CD8-positive, alpha-beta T cell (primary cell): ENCODE measurements at regions of chr10 and their contacts with region 1.

Region 1: GRCh38 chr10:93482145-93482834 is at the start of gene MYOF:
- DNase-seq: peak; percentile 10 to 79 (median 34)
- ATAC-seq: peak; percentile 95
- H3K4me3 ChIP-seq: peak within 1 kb of the TSS; percentile 38 to 44
- H3K4me3 Mint-ChIP-seq: peak within 1 kb of the TSS; percentile 84
- H3K27ac ChIP-seq: no peak within 1 kb of the TSS
- H3K27ac Mint-ChIP-seq: no peak within 1 kb of the TSS
- H3K4me1 ChIP-seq: peaks cover 6% of the 10 kb centered on the region
- H3K4me1 Mint-ChIP-seq: peaks cover 6% of the 10 kb centered on the region
- H3K27me3 ChIP-seq: peaks cover 3 to 10% of the 10 kb centered on the region in 2 experiments
- H3K27me3 Mint-ChIP-seq: peaks cover 31% of the 10 kb centered on the region
- CTCF ChIP-seq: peak; percentile 81
- total RNA-seq, gene MYOF: not detected

Region 2: GRCh38 chr10:93363891-93364648 is 118.2 kb before region 1 on chr10:
- CTCF ChIA-PET with region 1: interaction called, 28 read pairs
- POLR2A ChIA-PET with region 1: interaction called, 3 read pairs
- intact Hi-C with region 1: no loop called
- DNase-seq: no peak
- ATAC-seq: no peak
- H3K4me3 ChIP-seq: no peak overlapping the region
- H3K4me3 Mint-ChIP-seq: no peak overlapping the region
- H3K27ac ChIP-seq: no peak overlapping the region
- H3K27ac Mint-ChIP-seq: no peak overlapping the region
- H3K4me1 ChIP-seq: no peaks in the 10 kb centered on the region
- H3K4me1 Mint-ChIP-seq: no peaks in the 10 kb centered on the region
- H3K27me3 ChIP-seq: no peaks in the 10 kb centered on the region
- H3K27me3 Mint-ChIP-seq: peaks cover 6% of the 10 kb centered on the region
- CTCF ChIP-seq: no peak

Region 3: DNA sequence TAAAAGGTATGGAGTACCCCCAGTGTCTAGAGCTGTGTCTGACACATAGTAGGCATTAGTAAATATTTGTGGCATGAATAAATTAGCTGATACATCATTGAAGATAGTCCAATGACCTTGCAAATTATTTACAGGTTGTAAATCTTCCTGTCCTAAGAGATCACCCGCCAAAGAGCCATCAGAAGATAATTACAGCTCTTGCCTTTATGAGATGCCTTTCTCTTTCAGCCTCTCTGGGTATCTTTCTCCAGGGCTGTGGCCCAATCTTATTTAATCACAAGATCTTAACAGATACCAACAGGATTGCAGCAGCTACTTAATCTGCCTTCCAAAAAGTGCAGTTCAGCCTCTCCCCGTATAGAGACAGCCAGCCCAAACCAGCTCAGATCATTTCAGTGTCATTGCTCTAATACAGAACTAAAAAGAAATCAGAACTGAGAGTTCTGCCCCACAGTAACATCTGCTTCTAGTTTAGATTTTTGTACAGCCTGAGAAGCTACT is 41.6 kb before region 1 on chr10:
- CTCF ChIA-PET with region 1: interaction called, 13 read pairs
- POLR2A ChIA-PET with region 1: no interaction called
- intact Hi-C with region 1: no loop called
- DNase-seq: no peak
- ATAC-seq: no peak
- H3K4me3 ChIP-seq: no peak overlapping the region
- H3K4me3 Mint-ChIP-seq: no peak overlapping the region
- H3K27ac ChIP-seq: no peak overlapping the region
- H3K27ac Mint-ChIP-seq: no peak overlapping the region
- H3K4me1 ChIP-seq: no peaks in the 10 kb centered on the region
- H3K4me1 Mint-ChIP-seq: no peaks in the 10 kb centered on the region
- H3K27me3 ChIP-seq: no peaks in the 10 kb centered on the region
- H3K27me3 Mint-ChIP-seq: no peaks in the 10 kb centered on the region
- CTCF ChIP-seq: no peak

Region 4: GRCh38 chr10:93496322-93497041 is 14.2 kb after region 1 on chr10 and contains the start of gene CEP55:
- CTCF ChIA-PET with region 1: interaction called, 16 read pairs
- POLR2A ChIA-PET with region 1: interaction called, 8 read pairs
- intact Hi-C with region 1: loop called in 1 of 2 experiments (anchors 1 kb)
- DNase-seq: peak; percentile 90 to 96 (median 95)
- ATAC-seq: peak; percentile 99
- H3K4me3 ChIP-seq: peak within 1 kb of the TSS; percentile 87 to 97
- H3K4me3 Mint-ChIP-seq: peak within 1 kb of the TSS; percentile 90
- H3K27ac ChIP-seq: peak within 1 kb of the TSS in 1 of 2 experiments; percentile 54
- H3K27ac Mint-ChIP-seq: no peak within 1 kb of the TSS
- H3K4me1 ChIP-seq: peaks cover 10% of the 10 kb centered on the region
- H3K4me1 Mint-ChIP-seq: peaks cover 14% of the 10 kb centered on the region
- H3K27me3 ChIP-seq: no peaks in the 10 kb centered on the region
- H3K27me3 Mint-ChIP-seq: peaks cover 10% of the 10 kb centered on the region
- CTCF ChIP-seq: no peak
- total RNA-seq, gene CEP55: 0.16 TPM in 1 of 2 experiments, not detected in the other

Region 5: GRCh38 chr10:93509816-93510215 is 27.5 kb after region 1 on chr10:
- CTCF ChIA-PET with region 1: interaction called, 33 read pairs
- POLR2A ChIA-PET with region 1: no interaction called
- intact Hi-C with region 1: no loop called
- DNase-seq: no peak
- ATAC-seq: no peak
- H3K4me3 ChIP-seq: no peak overlapping the region
- H3K4me3 Mint-ChIP-seq: no peak overlapping the region
- H3K27ac ChIP-seq: no peak overlapping the region
- H3K27ac Mint-ChIP-seq: no peak overlapping the region
- H3K4me1 ChIP-seq: no peaks in the 10 kb centered on the region
- H3K4me1 Mint-ChIP-seq: no peaks in the 10 kb centered on the region
- H3K27me3 ChIP-seq: no peaks in the 10 kb centered on the region
- H3K27me3 Mint-ChIP-seq: peaks cover 2% of the 10 kb centered on the region
- CTCF ChIP-seq: no peak

Region 6: DNA sequence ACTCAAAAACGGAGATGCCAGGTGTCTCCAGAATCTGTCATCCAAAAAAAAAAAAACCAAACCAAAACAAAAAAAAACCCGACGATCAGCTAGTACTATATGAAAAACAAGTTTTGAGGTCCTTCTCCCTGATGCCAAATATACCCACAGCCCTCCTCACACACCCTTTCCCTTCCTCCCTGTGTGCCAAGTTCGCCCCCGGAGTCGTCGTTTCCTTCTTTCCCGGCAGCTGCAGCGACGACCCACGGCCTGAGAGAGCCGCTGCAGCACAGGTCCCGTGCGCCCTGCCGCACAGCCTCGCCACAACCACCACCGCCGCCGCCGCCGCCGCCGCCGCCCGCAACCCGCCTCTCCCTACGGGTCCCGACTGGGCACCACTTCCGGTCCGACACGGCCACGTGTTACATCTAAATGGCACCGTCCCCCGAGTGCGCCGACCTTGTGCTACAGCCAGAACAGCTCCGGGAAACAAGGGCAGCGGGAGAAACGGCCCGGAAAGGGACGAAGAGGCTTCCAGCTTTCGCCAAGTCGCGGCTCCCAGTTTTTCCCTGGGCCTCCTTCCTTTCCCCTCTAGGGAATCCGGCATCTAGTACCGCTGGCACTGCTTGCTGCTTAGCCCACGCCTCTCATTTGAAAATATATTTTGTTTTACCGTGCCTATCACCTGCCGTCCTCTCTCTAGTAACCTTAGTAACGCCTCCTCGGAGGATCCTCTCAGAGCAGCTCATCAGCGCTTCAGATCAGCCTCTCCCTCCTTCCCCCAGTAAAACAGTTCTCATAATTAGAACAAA is 220.1 kb after region 1 on chr10 and contains the start of gene FRA10AC1:
- CTCF ChIA-PET with region 1: no interaction called
- POLR2A ChIA-PET with region 1: no interaction called
- intact Hi-C with region 1: no loop called
- DNase-seq: peak; percentile 73 to 94 (median 89)
- ATAC-seq: peak; percentile 83
- H3K4me3 ChIP-seq: peak within 1 kb of the TSS; percentile 90 to 96
- H3K4me3 Mint-ChIP-seq: no peak within 1 kb of the TSS
- H3K27ac ChIP-seq: peak within 1 kb of the TSS; percentile 82 to 86
- H3K27ac Mint-ChIP-seq: no peak within 1 kb of the TSS
- H3K4me1 ChIP-seq: peaks cover 14% of the 10 kb centered on the region
- H3K4me1 Mint-ChIP-seq: peaks cover 15% of the 10 kb centered on the region
- H3K27me3 ChIP-seq: no peaks in the 10 kb centered on the region
- H3K27me3 Mint-ChIP-seq: no peaks in the 10 kb centered on the region
- CTCF ChIP-seq: no peak
- total RNA-seq, gene FRA10AC1: 6.2 to 7.0 TPM